AG04450 (cell line): ENCODE measurements at regions of chr7 and their contacts with region 1.

Region 1: GRCh38 chr7:100680167-100680575 is 6.6 kb downstream of the GNB2 start:
- DNase-seq: no peak
- H3K4me3 ChIP-seq: no peak overlapping the region
- H3K27ac ChIP-seq: no peak overlapping the region
- H3K27me3 ChIP-seq: no peaks in the 10 kb centered on the region
- CTCF ChIP-seq: no peak

Region 2: GRCh38 chr7:100396421-100396982 is 283.7 kb before region 1 on chr7:
- CTCF ChIA-PET with region 1: no interaction called
- POLR2A ChIA-PET with region 1: no interaction called
- DNase-seq: no peak
- H3K4me3 ChIP-seq: no peak overlapping the region
- H3K27ac ChIP-seq: no peak overlapping the region
- H3K27me3 ChIP-seq: peaks cover 51% of the 10 kb centered on the region
- CTCF ChIP-seq: no peak

Region 3: DNA sequence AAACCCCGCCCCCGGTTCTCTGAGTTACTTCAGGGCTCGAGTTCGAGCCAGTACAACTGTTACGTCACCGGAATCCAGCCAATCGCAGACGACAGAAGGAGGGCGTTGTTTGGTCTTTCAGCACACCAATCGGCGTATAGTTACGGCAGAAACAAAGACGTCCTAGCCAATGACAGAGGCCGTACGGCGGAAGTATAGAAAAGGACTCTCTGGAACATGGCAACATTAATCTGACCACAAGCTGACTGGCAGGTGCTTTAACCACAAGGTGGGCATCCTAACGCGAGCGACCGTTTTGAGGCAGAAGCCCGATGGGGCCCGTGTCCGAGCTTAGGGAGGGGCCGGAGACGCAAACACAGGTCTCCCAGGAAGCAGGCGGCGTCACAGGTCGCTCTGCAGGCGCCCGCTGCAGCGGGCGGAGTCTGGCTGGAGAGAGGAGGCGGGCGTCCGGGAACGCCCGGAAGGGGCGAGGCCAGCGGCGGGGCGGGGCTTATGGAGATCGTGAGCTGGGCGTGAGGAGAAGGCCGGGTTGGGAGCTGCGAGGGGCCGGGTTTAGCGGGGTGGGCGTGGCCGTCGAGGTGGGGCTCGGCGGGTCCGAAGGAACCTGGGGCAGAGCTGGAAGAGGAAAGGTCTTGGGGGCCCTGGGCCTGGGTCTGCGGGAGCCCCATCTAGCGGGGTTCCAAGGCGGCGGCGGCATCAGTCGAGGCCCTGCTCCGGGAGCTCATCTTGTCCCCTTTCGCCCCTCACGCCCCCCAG is 68.0 kb before region 1 on chr7 and contains the start of gene MOSPD3:
- CTCF ChIA-PET with region 1: no interaction called
- POLR2A ChIA-PET with region 1: interaction called, 16 read pairs
- DNase-seq: peak; percentile 99
- H3K4me3 ChIP-seq: peak within 1 kb of the TSS; percentile 90
- H3K27ac ChIP-seq: peak within 1 kb of the TSS; percentile 82
- H3K27me3 ChIP-seq: no peaks in the 10 kb centered on the region
- CTCF ChIP-seq: no peak
- polyA plus RNA-seq, gene MOSPD3: 9.1 and 10.0 TPM in 2 replicates

Region 4: DNA sequence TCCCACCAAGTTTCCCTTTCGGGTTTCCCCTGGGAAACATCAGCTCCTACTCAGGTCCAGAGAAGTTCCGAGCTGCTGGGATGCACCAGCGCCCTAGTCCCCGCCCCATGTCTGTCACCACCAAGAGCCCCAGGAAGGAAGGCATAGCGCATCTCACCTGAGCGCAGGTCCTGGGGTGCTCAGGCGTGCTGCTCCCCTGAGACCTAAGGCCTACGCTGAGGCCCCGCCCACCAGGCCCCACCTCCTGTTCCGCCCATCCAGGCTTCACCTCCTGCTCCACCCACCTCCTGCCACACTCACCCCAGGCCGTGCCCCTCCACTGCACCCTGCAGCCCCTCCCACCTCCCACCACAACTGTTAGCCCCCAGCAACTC is 37.6 kb before region 1 on chr7:
- CTCF ChIA-PET with region 1: no interaction called
- POLR2A ChIA-PET with region 1: no interaction called
- DNase-seq: no peak
- H3K4me3 ChIP-seq: no peak overlapping the region
- H3K27ac ChIP-seq: no peak overlapping the region
- H3K27me3 ChIP-seq: peaks cover 16% of the 10 kb centered on the region
- CTCF ChIP-seq: no peak

Region 5: GRCh38 chr7:100691676-100692577 is 11.8 kb after region 1 on chr7:
- CTCF ChIA-PET with region 1: interaction called, 34 read pairs
- POLR2A ChIA-PET with region 1: interaction called, 4 read pairs
- DNase-seq: no peak
- H3K4me3 ChIP-seq: peak overlapping the region; percentile 80
- H3K27ac ChIP-seq: no peak overlapping the region
- H3K27me3 ChIP-seq: peaks cover 2% of the 10 kb centered on the region
- CTCF ChIP-seq: peak; percentile 90